ENCODE measurements at regions of chr3 and their contacts with region 1.

Region 1: DNA sequence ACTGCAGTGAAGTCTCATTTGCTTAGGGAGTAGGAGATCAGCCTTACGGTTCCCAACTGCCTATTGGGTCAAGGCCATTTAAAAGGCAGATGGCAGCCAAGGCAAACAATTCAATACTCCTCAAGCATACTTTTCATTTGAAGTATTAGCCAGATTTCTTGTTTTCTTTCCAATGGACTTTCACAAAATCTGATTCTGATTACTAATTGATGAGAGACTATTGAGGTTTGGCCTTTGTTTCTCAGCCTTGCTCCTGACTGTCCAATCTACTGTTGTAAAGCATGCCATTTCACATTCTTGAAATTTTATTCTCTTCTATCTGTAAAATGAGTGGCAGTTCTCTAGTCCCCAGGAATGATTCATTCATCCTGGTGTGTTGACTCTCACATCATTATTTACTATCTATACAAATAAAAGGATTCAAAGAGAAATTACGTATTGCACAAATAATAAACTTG is 166.2 kb upstream of the TGFBR2 start:
- DNase-seq: no peak
- ATAC-seq: no peak

Region 2: GRCh38 chr3:30112902-30113484 is 327.2 kb before region 1 on chr3:
- intact Hi-C with region 1: loop called (anchors 10 kb)
- DNase-seq: no peak
- ATAC-seq: no peak

Measured in Right ventricle myocardium inferior (tissue), 1 donor.